ENCODE measurements at regions of chr17 and their contacts with region 1.

Region 1: GRCh38 chr17:77645072-77646045 is 313.1 kb upstream of the TNRC6C start:
- DNase-seq: peak; percentile 85
- H3K4me3 Mint-ChIP-seq: peak overlapping the region; percentile 68
- H3K27ac Mint-ChIP-seq: peak overlapping the region; percentile 84
- H3K4me1 Mint-ChIP-seq: peaks cover 26% of the 10 kb centered on the region
- H3K27me3 Mint-ChIP-seq: no peaks in the 10 kb centered on the region

Region 2: GRCh38 chr17:77542551-77543490 is 102.5 kb before region 1 on chr17:
- CTCF ChIA-PET with region 1: interaction called, 11 read pairs
- POLR2A ChIA-PET with region 1: no interaction called
- intact Hi-C with region 1: loop called (anchors 1 kb)
- DNase-seq: peak; percentile 76
- H3K4me3 Mint-ChIP-seq: no peak overlapping the region
- H3K27ac Mint-ChIP-seq: no peak overlapping the region
- H3K4me1 Mint-ChIP-seq: no peaks in the 10 kb centered on the region
- H3K27me3 Mint-ChIP-seq: peaks cover 9% of the 10 kb centered on the region

Region 3: DNA sequence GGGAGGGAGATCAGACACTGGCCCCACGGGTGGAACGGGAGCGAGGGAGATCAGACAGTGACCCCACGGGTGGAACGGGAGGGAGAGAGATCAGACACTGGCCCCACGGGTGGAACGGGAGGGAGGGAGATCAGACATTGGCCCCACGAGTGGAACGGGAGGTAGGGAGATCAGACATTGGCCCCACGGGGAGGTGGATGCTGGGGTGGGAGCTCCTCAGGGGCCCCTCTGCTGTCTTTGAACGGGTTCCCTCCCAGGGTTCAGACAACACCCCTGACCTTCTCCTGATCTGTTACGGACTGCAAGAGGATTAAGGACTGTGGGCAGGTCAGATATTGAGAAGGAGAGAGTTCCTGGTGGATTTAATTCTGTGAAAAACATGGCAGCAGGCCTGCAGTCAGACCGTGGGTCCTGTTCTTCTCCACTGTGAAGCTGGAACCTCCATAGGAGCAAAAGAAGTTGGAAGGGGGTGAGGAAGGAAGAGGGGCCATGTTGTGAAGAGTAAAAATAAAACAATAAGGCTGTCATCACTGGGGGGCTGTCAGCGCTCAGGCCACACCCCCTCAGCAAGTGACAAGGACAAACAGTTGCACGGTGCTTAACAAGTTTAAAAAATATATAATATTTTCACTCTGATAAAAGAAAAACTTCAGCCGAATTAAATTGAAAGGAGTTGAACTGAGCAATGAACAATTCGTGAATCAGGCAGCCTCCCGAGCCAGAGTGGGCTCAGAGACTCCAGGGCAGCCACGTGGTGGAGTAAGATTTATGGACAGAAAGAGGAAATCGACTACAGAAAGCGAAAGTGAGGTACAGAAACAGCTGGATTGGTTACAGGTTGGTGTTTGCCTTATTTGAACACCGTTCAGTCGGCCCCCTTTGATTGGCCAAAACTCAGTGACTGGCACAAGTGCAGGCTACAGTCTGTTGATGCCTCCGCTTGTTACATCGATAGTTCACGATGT is 35.5 kb before region 1 on chr17:
- CTCF ChIA-PET with region 1: no interaction called
- POLR2A ChIA-PET with region 1: interaction called, 3 read pairs
- intact Hi-C with region 1: loop called (anchors 1 kb)
- DNase-seq: peak; percentile 79
- H3K4me3 Mint-ChIP-seq: peak overlapping the region; percentile 51
- H3K27ac Mint-ChIP-seq: peak overlapping the region; percentile 29
- H3K4me1 Mint-ChIP-seq: peaks cover 25% of the 10 kb centered on the region
- H3K27me3 Mint-ChIP-seq: no peaks in the 10 kb centered on the region

Region 4: DNA sequence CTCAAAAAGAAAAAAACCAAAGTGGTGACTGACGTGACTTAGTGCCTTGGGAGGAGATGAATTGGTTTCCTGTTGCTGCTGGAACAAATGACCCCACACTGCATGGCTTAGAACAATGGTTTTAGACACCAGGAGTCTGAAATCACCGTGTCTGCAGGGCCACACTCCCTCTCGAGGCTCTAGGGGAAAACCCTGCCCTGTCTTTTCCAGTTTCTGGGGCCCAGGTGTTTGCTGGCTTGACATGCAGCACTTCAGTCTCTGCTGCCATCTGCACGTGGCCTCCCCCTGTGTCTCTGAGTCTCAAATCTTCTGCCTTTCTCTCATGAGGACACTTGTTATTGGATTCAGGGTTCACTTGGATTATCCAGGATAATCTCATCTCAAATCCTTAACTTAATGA is 10.6 kb before region 1 on chr17:
- CTCF ChIA-PET with region 1: interaction called, 10 read pairs
- POLR2A ChIA-PET with region 1: no interaction called
- intact Hi-C with region 1: loop called (anchors 1 kb)
- DNase-seq: peak; percentile 79
- H3K4me3 Mint-ChIP-seq: no peak overlapping the region
- H3K27ac Mint-ChIP-seq: peak overlapping the region; percentile 46
- H3K4me1 Mint-ChIP-seq: peaks cover 17% of the 10 kb centered on the region
- H3K27me3 Mint-ChIP-seq: peaks cover 5% of the 10 kb centered on the region

Measured in activated CD4-positive, alpha-beta memory T cell treated with anti-CD3 and anti-CD28 coated beads for 36 hours (primary cell).